ENCODE measurements at regions of chrX and their contacts with region 1.

Region 1: GRCh38 chrX:153763989-153764755 is at the start of gene PLXNB3:
- DNase-seq: peak; percentile 0
- ATAC-seq: peak; percentile 95
- H3K4me3 ChIP-seq: no peak within 1 kb of the TSS
- H3K27ac ChIP-seq: no peak within 1 kb of the TSS
- H3K4me1 ChIP-seq: no peaks in the 10 kb centered on the region
- H3K27me3 ChIP-seq: no peaks in the 10 kb centered on the region
- CTCF ChIP-seq: peak; percentile 79 to 90 (median 87)
- EP300 ChIP-seq: no peak
- POLR2A ChIP-seq: no peak
- RAD21 ChIP-seq: peak; percentile 85
- polyA plus RNA-seq, gene PLXNB3: not detected

Region 2: DNA sequence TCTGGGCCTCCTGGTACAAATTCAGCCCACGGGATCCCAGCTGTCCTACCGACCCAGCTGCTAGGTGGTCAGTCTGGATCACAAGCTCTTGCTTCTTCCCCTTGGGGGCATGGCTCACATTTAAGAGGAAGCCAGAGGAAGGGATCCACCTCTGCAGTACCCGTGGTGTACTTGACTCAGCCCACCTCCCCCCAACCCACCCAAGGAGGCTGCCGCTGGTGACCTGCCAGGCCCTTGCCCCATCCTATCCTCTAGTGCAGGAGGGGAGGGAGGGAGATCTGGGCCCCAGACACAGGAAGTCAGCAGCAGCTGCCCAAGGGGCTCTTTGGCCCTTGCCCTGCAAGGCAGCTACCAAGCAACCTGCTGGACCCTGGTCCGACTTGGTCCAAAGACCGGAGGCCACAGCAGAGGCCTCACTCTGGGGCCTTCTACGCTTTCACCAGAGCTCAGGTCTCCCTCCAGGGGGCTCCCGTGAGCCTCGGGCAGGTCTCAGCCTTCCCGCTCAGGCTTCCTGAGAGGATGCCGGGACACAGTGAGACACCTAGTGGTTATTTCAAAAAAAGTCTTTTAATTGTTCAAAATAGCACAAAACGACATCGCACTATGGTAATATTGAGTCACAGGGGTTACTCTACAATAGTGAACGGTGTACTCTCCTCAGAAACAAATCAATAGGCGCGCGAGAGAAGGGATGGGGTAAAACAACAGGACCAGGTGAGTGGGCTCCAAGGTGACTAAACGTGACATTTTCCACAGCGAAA is 183.0 kb after region 1 on chrX:
- CTCF ChIA-PET with region 1: interaction called, 26 read pairs
- POLR2A ChIA-PET with region 1: no interaction called
- RAD21 ChIA-PET with region 1: interaction called, 3 read pairs
- SMC1A ChIA-PET with region 1: no interaction called
- in situ Hi-C with region 1: no loop called
- intact Hi-C with region 1: loop called (anchors 1 kb)
- DNase-seq: no peak
- ATAC-seq: peak; percentile 95
- H3K4me3 ChIP-seq: no peak overlapping the region
- H3K27ac ChIP-seq: no peak overlapping the region
- H3K4me1 ChIP-seq: no peaks in the 10 kb centered on the region
- H3K27me3 ChIP-seq: no peaks in the 10 kb centered on the region
- CTCF ChIP-seq: peak; percentile 95 to 97 (median 97); a peak in 5 of 6 replicates
- EP300 ChIP-seq: no peak
- POLR2A ChIP-seq: no peak; the same call in none of the 2 replicates
- RAD21 ChIP-seq: peak; percentile 62

Region 3: DNA sequence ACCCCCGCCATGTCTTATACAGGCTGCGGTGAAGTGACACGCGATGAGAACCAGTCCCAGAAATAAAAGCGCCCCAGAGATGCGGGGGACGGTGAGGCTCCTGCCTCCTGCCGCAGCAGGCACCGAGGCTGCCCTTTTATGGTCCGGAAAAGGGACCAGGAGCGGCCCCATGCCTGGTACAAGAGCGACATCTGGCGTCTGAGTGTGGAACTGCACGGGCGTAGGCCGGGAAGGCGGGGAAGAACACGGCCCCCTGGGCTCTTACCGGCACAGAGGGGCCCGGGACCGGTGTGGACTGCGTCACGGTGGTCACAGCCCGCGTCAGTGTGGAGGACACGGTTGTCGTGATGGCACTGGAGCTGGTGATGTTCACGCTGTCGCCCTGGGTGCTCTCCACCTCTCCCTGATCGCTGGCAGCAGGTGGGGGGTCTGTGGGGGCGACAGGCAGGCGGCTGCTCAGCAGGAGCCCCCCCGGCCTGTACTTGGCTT is 189.2 kb after region 1 on chrX:
- CTCF ChIA-PET with region 1: interaction called, 26 read pairs
- POLR2A ChIA-PET with region 1: no interaction called
- RAD21 ChIA-PET with region 1: no interaction called
- SMC1A ChIA-PET with region 1: no interaction called
- in situ Hi-C with region 1: no loop called
- intact Hi-C with region 1: loop called (anchors 1 kb)
- DNase-seq: no peak
- ATAC-seq: peak; percentile 85
- H3K4me3 ChIP-seq: no peak overlapping the region
- H3K27ac ChIP-seq: peak overlapping the region; percentile 37
- H3K4me1 ChIP-seq: no peaks in the 10 kb centered on the region
- H3K27me3 ChIP-seq: no peaks in the 10 kb centered on the region
- CTCF ChIP-seq: peak; percentile 92 to 100 (median 95); a peak in 5 of 6 replicates
- EP300 ChIP-seq: no peak
- POLR2A ChIP-seq: peak; percentile 74
- RAD21 ChIP-seq: peak; percentile 87

Region 4: GRCh38 chrX:153963546-153963945 is 199.4 kb after region 1 on chrX:
- CTCF ChIA-PET with region 1: interaction called, 5 read pairs
- POLR2A ChIA-PET with region 1: no interaction called
- RAD21 ChIA-PET with region 1: no interaction called
- SMC1A ChIA-PET with region 1: no interaction called
- in situ Hi-C with region 1: loop called (anchors 5 kb)
- intact Hi-C with region 1: no loop called
- DNase-seq: no peak
- ATAC-seq: no peak
- H3K4me3 ChIP-seq: no peak overlapping the region
- H3K27ac ChIP-seq: no peak overlapping the region
- H3K4me1 ChIP-seq: peaks cover 9% of the 10 kb centered on the region
- H3K27me3 ChIP-seq: no peaks in the 10 kb centered on the region
- CTCF ChIP-seq: no peak
- EP300 ChIP-seq: no peak
- POLR2A ChIP-seq: no peak
- RAD21 ChIP-seq: no peak

Region 5: GRCh38 chrX:154051201-154051810 is 287.1 kb after region 1 on chrX:
- CTCF ChIA-PET with region 1: no interaction called
- POLR2A ChIA-PET with region 1: no interaction called
- RAD21 ChIA-PET with region 1: no interaction called
- SMC1A ChIA-PET with region 1: no interaction called
- in situ Hi-C with region 1: no loop called
- intact Hi-C with region 1: loop called (anchors 5 kb)
- DNase-seq: no peak
- ATAC-seq: peak; percentile 93
- H3K4me3 ChIP-seq: no peak overlapping the region
- H3K27ac ChIP-seq: no peak overlapping the region
- H3K4me1 ChIP-seq: no peaks in the 10 kb centered on the region
- H3K27me3 ChIP-seq: no peaks in the 10 kb centered on the region
- CTCF ChIP-seq: peak; percentile 74 to 85 (median 78)
- EP300 ChIP-seq: no peak
- POLR2A ChIP-seq: no peak
- RAD21 ChIP-seq: peak; percentile 68